Heart left ventricle (tissue), 16 donors: ENCODE measurements at regions of chr1 and their contacts with region 1.

Region 1: GRCh38 chr1:176374967-176375569 is 87.9 kb upstream of the PAPPA2 start:
- DNase-seq: peak; percentile 50 to 70 (median 66)
- ATAC-seq: peak in 3 of 4 donors; percentile 69 to 86 (median 83)
- H3K4me3 ChIP-seq: no peak overlapping the region
- H3K27ac ChIP-seq: no peak overlapping the region
- H3K4me1 ChIP-seq: peaks cover 0 to 6% (median 0%) of the 10 kb centered on the region in 12 donors
- H3K27me3 ChIP-seq: no peaks in the 10 kb centered on the region
- CTCF ChIP-seq: peak; percentile 73 to 86 (median 82)
- POLR2A ChIP-seq: no peak

Region 2: DNA sequence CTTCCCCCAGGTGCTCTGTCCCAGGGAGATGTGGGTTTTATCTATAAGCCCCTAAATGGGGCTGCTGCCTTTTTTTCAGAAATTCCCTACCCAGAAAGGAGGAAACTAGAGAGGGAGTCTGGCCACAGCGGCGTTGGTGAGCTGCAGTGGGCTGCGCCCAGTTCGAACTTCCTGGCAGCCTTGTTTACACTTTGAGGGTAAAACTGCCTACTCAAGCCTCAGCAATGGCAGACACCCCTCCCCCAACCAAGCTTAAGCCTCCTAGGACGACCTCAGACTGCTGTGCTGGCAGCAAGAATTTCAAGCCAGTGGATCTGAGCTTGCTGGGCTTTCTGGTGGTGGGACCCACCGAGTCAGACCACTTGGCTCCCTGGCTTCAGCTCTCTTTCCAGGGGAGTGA is 41.7 kb after region 1 on chr1:
- intact Hi-C with region 1: no loop called
- DNase-seq: no peak
- ATAC-seq: no peak
- H3K4me3 ChIP-seq: no peak overlapping the region
- H3K27ac ChIP-seq: no peak overlapping the region
- H3K4me1 ChIP-seq: no peaks in the 10 kb centered on the region
- H3K27me3 ChIP-seq: no peaks in the 10 kb centered on the region
- CTCF ChIP-seq: no peak
- POLR2A ChIP-seq: no peak

Region 3: GRCh38 chr1:176466514-176467220 is 91.6 kb after region 1 on chr1:
- intact Hi-C with region 1: loop called in 1 of 10 experiments (anchors 2 kb)
- DNase-seq: no peak
- ATAC-seq: peak in 2 of 4 donors; percentile 43 to 48
- H3K4me3 ChIP-seq: no peak overlapping the region
- H3K27ac ChIP-seq: no peak overlapping the region
- H3K4me1 ChIP-seq: peaks cover 0 to 8% (median 0%) of the 10 kb centered on the region in 12 donors
- H3K27me3 ChIP-seq: no peaks in the 10 kb centered on the region
- CTCF ChIP-seq: peak in 8 of 12 donors; percentile 6 to 38 (median 19)
- POLR2A ChIP-seq: no peak

Region 4: GRCh38 chr1:176552217-176552991 is 177.3 kb after region 1 on chr1:
- intact Hi-C with region 1: loop called in 6 of 10 experiments (anchors 5 to 10 kb)
- DNase-seq: no peak
- ATAC-seq: no peak
- H3K4me3 ChIP-seq: no peak overlapping the region
- H3K27ac ChIP-seq: no peak overlapping the region
- H3K4me1 ChIP-seq: peaks cover 0 to 5% (median 0%) of the 10 kb centered on the region in 12 donors
- H3K27me3 ChIP-seq: peaks cover 0 to 42% (median 6%) of the 10 kb centered on the region in 9 donors
- CTCF ChIP-seq: no peak
- POLR2A ChIP-seq: no peak

Region 5: DNA sequence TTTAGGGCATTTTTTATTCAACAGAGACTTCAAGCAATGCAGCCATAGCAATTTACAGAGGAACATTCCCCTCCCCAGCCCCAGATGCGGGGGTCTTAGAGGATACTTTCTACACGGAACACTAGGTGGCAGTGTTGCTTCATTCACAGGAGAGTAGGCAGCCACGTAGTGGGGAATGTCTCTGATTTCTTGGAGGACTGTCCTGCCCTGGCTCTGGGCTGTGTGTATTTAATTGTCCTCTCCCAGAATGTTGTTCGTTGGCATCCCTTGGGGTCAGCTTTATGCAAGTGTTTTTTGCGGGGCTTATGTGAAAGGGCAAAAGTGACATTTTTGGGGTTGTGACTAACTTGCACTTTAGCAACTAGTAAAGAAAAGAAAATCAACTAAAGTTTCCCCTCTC is 184.8 kb after region 1 on chr1:
- intact Hi-C with region 1: loop called in 8 of 10 experiments (anchors 2 to 10 kb)
- DNase-seq: peak in 4 of 5 donors; percentile 28 to 51 (median 44)
- ATAC-seq: peak; percentile 88 to 95 (median 90)
- H3K4me3 ChIP-seq: no peak overlapping the region
- H3K27ac ChIP-seq: no peak overlapping the region
- H3K4me1 ChIP-seq: peaks cover 0 to 10% (median 0%) of the 10 kb centered on the region in 12 donors
- H3K27me3 ChIP-seq: peaks cover 0 to 16% (median 0%) of the 10 kb centered on the region in 9 donors
- CTCF ChIP-seq: peak; percentile 75 to 91 (median 84)
- POLR2A ChIP-seq: no peak

Region 6: DNA sequence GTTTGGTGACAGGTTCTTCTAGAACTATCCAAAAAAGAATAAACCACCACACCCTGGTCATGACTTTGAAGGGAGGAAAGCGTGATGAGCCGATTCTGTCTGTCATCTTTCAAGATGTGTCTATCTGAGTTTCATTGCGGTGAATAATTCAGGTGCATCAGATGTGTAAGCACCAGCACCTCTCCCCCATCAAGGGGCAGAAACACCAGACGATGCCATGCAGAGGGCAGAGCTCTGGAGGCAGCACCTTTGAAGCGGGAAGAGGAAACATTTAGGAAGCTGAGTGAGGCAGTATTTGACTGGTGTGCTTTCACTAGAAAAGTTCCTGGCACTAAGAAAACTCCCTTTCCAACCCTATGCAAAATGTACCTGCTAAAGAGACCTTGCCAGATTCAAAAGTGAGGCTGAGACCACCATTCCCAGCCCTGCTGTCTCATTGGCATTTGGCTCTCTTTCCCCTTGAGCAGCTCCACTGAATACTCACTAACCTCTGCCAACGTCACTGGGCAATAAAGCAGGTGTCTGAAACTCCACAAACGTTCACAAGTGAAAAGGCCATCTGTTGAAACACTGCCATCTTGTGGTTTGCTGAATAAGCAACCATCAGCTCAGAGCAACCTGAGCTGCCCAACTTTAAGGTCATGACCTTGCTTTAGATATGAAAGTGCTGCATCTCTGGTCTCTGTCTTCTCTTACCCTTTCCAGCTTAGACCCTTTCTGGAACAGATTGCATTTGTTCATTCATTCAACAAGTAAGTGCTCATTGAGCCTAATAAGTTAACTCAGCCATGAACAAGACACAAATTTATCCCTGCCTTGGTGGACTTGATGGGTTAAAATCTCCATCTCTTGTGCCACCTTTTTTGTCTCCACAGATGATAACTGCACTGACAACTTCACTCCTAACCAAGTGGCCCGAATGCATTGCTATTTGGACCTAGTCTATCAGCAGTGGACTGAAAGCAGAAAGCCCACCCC is 316.5 kb after region 1 on chr1:
- intact Hi-C with region 1: loop called in 7 of 10 experiments (anchors 2 to 10 kb)
- DNase-seq: peak in 4 of 5 donors; percentile 34 to 60 (median 54)
- ATAC-seq: peak; percentile 53 to 67 (median 58)
- H3K4me3 ChIP-seq: no peak overlapping the region
- H3K27ac ChIP-seq: peak overlapping the region; percentile 47 to 92 (median 84)
- H3K4me1 ChIP-seq: peaks cover 0 to 35% (median 11%) of the 10 kb centered on the region in 12 donors
- H3K27me3 ChIP-seq: no peaks in the 10 kb centered on the region
- CTCF ChIP-seq: peak; percentile 38 to 78 (median 62)
- POLR2A ChIP-seq: no peak

Region 7: DNA sequence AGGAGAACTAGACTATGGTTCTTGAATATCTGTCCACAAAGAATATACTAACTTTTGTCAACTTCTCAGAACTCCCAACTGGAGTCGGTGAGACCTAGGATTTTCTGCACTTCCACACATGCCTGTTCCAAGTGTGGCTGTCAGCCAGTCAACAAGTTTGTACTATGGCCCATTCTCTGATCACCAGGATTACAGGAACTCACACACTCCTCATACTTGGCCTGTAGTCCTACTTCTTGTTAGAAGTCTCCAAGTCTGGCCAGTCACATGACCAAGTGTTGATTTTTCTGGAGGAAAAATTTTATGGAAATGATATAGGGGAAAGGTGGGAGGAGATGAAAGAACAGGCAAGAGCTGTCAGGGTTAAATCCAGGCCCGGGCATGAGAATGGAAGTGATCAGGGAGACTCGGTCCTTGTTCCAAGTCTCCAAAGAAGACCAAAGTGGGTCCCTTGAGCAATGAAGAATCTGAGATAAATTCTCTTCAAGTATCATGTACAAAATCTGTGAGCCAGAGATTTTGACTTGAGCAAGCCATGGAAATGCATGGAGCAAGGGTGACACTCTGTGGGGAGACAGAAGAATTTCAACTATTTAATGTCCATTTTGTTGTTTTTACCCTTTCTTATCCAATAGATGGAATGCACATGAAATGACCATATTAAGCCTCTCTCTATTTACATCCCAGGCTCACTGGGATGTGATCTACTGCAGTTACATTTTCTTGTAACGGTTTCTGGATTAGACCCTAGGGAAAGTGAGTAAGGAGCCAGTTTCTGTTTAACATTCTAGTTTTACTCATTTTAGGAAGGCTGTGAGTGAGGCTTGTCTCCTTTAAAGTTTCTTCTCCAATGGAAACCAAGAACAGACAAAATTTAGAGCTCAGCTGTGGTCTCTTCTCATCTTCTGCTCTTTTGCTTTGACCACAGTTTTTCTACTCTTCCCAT is 468.6 kb after region 1 on chr1:
- intact Hi-C with region 1: loop called in 9 of 10 experiments (anchors 1 to 10 kb)
- DNase-seq: peak in 3 of 5 donors; percentile 22 to 38 (median 33)
- ATAC-seq: peak; percentile 19 to 55 (median 40)
- H3K4me3 ChIP-seq: no peak overlapping the region
- H3K27ac ChIP-seq: no peak overlapping the region
- H3K4me1 ChIP-seq: peaks cover 0 to 25% (median 2%) of the 10 kb centered on the region in 12 donors
- H3K27me3 ChIP-seq: no peaks in the 10 kb centered on the region
- CTCF ChIP-seq: peak; percentile 42 to 77 (median 61)
- POLR2A ChIP-seq: no peak

Region 8: DNA sequence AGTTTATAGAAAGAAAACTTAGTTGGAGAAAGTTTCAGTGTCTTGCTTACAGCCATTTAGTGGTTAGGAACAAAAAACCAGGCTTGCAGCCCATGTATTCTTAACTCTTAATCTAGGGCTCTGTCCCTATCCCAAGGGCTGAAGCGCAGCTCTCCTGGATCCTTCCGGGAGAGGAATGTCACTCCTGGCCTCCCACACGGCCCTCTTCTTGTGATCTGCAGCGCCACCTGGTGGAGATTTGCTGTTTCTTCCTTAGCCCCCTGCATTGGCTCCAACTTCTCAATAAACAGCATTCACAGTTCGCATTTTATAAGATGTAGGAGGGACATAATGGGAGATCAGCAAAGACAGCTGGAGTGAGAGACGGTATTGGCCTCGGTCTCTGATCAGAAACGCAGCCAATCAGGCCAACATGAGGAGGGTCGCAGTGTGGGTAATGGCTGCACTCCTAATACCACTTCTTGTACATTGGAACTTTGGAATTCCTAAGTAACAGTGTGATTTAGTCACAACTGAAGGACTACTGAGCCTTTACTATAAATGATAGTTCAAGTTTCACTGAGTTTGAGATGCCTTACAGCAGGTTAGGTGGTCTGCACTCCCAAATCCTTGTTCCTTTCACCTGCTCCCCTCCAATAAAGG is 506.0 kb after region 1 on chr1:
- intact Hi-C with region 1: loop called (anchors 1 to 10 kb)
- DNase-seq: peak; percentile 58 to 71 (median 68)
- ATAC-seq: peak; percentile 57 to 92 (median 80)
- H3K4me3 ChIP-seq: no peak overlapping the region
- H3K27ac ChIP-seq: no peak overlapping the region
- H3K4me1 ChIP-seq: peaks cover 0 to 5% (median 0%) of the 10 kb centered on the region in 12 donors
- H3K27me3 ChIP-seq: no peaks in the 10 kb centered on the region
- CTCF ChIP-seq: peak; percentile 69 to 87 (median 79)
- POLR2A ChIP-seq: no peak